Caco-2 (cell line): ENCODE measurements at regions of chr13 and their contacts with region 1.

Region 1: GRCh38 chr13:41411522-41411921 is 45.8 kb upstream of the RGCC start:
- DNase-seq: peak; percentile 72 to 74
- H3K4me3 ChIP-seq: no peak overlapping the region
- H3K4me3 Mint-ChIP-seq: no peak overlapping the region
- H3K27ac Mint-ChIP-seq: no peak overlapping the region
- H3K4me1 ChIP-seq: 0 out of 2 replicates have a peak, but pooled peaks cover 4% of the 10 kb centered on the region
- H3K4me1 Mint-ChIP-seq: no peaks in the 10 kb centered on the region
- H3K27me3 ChIP-seq: no peaks in the 10 kb centered on the region
- H3K27me3 Mint-ChIP-seq: no peaks in the 10 kb centered on the region
- CTCF ChIP-seq: peak; percentile 48 to 52

Region 2: GRCh38 chr13:41428155-41428554 is 16.6 kb after region 1 on chr13:
- CTCF ChIA-PET with region 1: no interaction called
- POLR2A ChIA-PET with region 1: no interaction called
- intact Hi-C with region 1: no loop called
- DNase-seq: no peak
- H3K4me3 ChIP-seq: no peak overlapping the region
- H3K4me3 Mint-ChIP-seq: no peak overlapping the region
- H3K27ac Mint-ChIP-seq: no peak overlapping the region
- H3K4me1 ChIP-seq: peaks cover 7% of the 10 kb centered on the region; the same call in 1 of the 2 replicates
- H3K4me1 Mint-ChIP-seq: no peaks in the 10 kb centered on the region
- H3K27me3 ChIP-seq: no peaks in the 10 kb centered on the region
- H3K27me3 Mint-ChIP-seq: no peaks in the 10 kb centered on the region
- CTCF ChIP-seq: no peak

Region 3: DNA sequence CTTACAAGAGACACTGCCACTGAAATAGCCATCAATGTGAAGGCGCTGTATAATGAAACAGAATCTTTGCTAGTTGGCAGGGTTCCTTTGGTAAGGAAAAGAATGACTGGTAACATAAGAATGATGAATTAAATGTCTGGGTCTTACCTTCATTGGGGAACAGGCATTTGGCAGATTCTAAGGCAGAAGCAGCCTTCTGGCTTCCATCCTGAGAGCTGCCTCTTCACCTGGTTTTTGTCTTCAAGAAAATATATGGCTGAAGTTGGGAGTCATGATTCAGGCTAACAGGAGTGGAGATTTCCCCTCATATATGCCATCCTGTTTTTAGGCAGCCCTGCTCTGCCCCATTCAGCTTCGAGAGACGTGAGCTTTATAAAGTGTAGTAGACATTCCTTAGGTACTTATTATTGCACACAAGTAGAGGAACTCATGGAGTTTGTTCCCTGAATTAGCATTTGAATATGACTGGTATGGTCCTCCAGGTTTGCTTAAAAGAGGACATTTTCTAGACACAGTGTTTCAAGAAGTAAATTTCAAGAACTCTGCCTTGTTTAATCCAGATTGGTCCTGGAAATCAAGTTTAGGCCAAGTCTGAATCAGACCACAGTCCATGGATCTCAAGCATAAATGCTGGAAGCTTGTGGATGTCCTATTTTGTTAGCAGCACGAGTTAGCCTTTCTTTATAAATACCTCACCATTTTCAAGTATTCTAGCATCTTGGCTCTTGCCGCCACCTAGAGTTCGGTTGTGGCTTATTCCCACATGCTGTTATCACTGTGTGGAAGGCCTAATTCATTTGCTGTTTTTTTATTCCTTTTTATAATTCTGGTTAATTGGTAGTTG is 804.3 kb after region 1 on chr13:
- CTCF ChIA-PET with region 1: no interaction called
- POLR2A ChIA-PET with region 1: no interaction called
- intact Hi-C with region 1: loop called (anchors 10 kb)
- DNase-seq: peak; percentile 45 to 55
- H3K4me3 ChIP-seq: no peak overlapping the region
- H3K4me3 Mint-ChIP-seq: no peak overlapping the region
- H3K27ac Mint-ChIP-seq: no peak overlapping the region
- H3K4me1 ChIP-seq: no peaks in the 10 kb centered on the region
- H3K4me1 Mint-ChIP-seq: peaks cover 6% of the 10 kb centered on the region
- H3K27me3 ChIP-seq: no peaks in the 10 kb centered on the region
- H3K27me3 Mint-ChIP-seq: no peaks in the 10 kb centered on the region
- CTCF ChIP-seq: peak; percentile 41 to 65